Calu3 (cell line): ENCODE measurements at regions of chr22 and their contacts with region 1.

Region 1: GRCh38 chr22:17149076-17149810 is 9.8 kb downstream of the HDHD5 start:
- DNase-seq: peak; percentile 48
- H3K4me3 Mint-ChIP-seq: no peak overlapping the region
- H3K27ac Mint-ChIP-seq: peak overlapping the region; percentile 30
- H3K4me1 Mint-ChIP-seq: peaks cover 52% of the 10 kb centered on the region
- H3K27me3 Mint-ChIP-seq: no peaks in the 10 kb centered on the region
- CTCF ChIP-seq: no peak

Region 2: GRCh38 chr22:17121227-17122195 is 27.7 kb before region 1 on chr22 and contains the start of gene TMEM121B:
- CTCF ChIA-PET with region 1: interaction called, 10 read pairs
- intact Hi-C with region 1: no loop called
- DNase-seq: peak; percentile 59
- H3K4me3 Mint-ChIP-seq: peak within 1 kb of the TSS; percentile 71
- H3K27ac Mint-ChIP-seq: no peak within 1 kb of the TSS
- H3K4me1 Mint-ChIP-seq: no peaks in the 10 kb centered on the region
- H3K27me3 Mint-ChIP-seq: peaks cover 68% of the 10 kb centered on the region
- CTCF ChIP-seq: no peak
- total RNA-seq, gene TMEM121B: 0.21 and 0.42 TPM in 2 replicates

Region 3: GRCh38 chr22:17194213-17194612 is 45.0 kb after region 1 on chr22:
- CTCF ChIA-PET with region 1: no interaction called
- intact Hi-C with region 1: no loop called
- DNase-seq: no peak
- H3K4me3 Mint-ChIP-seq: no peak overlapping the region
- H3K27ac Mint-ChIP-seq: no peak overlapping the region
- H3K4me1 Mint-ChIP-seq: no peaks in the 10 kb centered on the region
- H3K27me3 Mint-ChIP-seq: peaks cover 38% of the 10 kb centered on the region
- CTCF ChIP-seq: no peak